Left cardiac atrium (tissue), 4 donors: ENCODE measurements at regions of chr18 and their contacts with region 1.

Region 1: GRCh38 chr18:42586601-42587000 is 528.9 kb downstream of the RIT2 start:
- DNase-seq: no peak
- ATAC-seq: no peak

Region 2: DNA sequence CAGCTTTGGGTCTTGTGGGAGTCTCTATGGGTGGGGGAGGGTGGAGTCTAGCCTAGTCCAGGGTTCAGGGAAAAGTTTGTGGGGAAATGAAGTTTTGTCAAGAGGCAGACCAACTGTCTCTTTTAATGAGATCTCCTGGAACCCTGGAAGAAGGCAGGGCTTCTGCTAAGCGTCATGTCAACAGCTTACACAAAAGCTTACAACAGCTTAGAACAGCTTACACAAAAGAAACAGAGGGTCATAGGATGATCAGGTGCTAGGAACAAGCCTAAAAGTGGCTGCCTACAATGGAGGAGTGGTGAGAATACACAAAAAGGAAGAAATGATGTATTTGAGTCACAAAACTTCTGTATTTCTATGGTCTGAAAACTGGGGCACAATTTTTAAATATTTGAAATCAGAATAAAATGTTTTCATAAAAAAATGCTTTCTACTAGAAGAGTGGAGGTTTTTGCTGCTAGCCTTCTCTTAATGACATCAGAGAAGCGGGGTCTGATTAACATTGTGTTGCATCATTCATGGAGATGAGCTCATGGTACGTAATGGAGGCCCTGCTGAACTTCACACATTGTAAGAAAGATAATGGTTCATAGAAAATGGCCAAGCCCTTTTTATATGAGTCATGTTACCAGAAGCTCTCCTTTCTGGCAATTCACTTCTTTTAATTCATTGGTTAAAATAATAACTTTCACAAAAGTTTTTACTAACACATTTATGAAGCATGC is 280.6 kb before region 1 on chr18:
- intact Hi-C with region 1: loop called in 1 of 2 experiments (anchors 10 kb)
- DNase-seq: no peak
- ATAC-seq: peak in 1 of 2 donors; percentile 30